Naive thymus-derived CD4-positive, alpha-beta T cell (primary cell): ENCODE measurements at regions of chr12 and their contacts with region 1.

Region 1: GRCh38 chr12:98373025-98373554 is 142.3 kb upstream of the TMPO start:
- DNase-seq: no peak
- ATAC-seq: no peak
- H3K4me3 ChIP-seq: no peak overlapping the region
- H3K4me3 Mint-ChIP-seq: no peak overlapping the region
- H3K27ac ChIP-seq: no peak overlapping the region
- H3K27ac Mint-ChIP-seq: no peak overlapping the region
- H3K4me1 ChIP-seq: no peaks in the 10 kb centered on the region
- H3K4me1 Mint-ChIP-seq: peaks cover 5 to 26% (median 10%) of the 10 kb centered on the region in 7 donors
- H3K27me3 ChIP-seq: peaks cover 0 to 5% of the 10 kb centered on the region in 2 donors
- H3K27me3 Mint-ChIP-seq: peaks cover 32 to 58% (median 48%) of the 10 kb centered on the region in 5 donors

Region 2: GRCh38 chr12:96985480-96986362 is 1387.4 kb before region 1 on chr12:
- CTCF ChIA-PET with region 1: no interaction called
- POLR2A ChIA-PET with region 1: no interaction called
- intact Hi-C with region 1: loop called in 1 of 2 experiments (anchors 2 kb)
- DNase-seq: peak in 8 of 9 donors; percentile 23 to 61 (median 48)
- ATAC-seq: peak; percentile 89
- H3K4me3 ChIP-seq: peak overlapping the region; percentile 52
- H3K4me3 Mint-ChIP-seq: peak overlapping the region; percentile 60 to 90 (median 84)
- H3K27ac ChIP-seq: no peak overlapping the region
- H3K27ac Mint-ChIP-seq: peak overlapping the region in 1 of 9 donors; percentile 49
- H3K4me1 ChIP-seq: peaks cover 0 to 4% of the 10 kb centered on the region in 2 donors
- H3K4me1 Mint-ChIP-seq: peaks cover 7 to 9% (median 8%) of the 10 kb centered on the region in 7 donors
- H3K27me3 ChIP-seq: no peaks in the 10 kb centered on the region
- H3K27me3 Mint-ChIP-seq: peaks cover 13 to 47% (median 33%) of the 10 kb centered on the region in 5 donors

Region 3: GRCh38 chr12:97148941-97149559 is 1224.0 kb before region 1 on chr12:
- CTCF ChIA-PET with region 1: no interaction called
- POLR2A ChIA-PET with region 1: no interaction called
- intact Hi-C with region 1: loop called in 1 of 2 experiments (anchors 1 kb)
- DNase-seq: peak; percentile 4 to 49 (median 10)
- ATAC-seq: peak; percentile 85
- H3K4me3 ChIP-seq: no peak overlapping the region
- H3K4me3 Mint-ChIP-seq: no peak overlapping the region
- H3K27ac ChIP-seq: no peak overlapping the region
- H3K27ac Mint-ChIP-seq: no peak overlapping the region
- H3K4me1 ChIP-seq: no peaks in the 10 kb centered on the region
- H3K4me1 Mint-ChIP-seq: peaks cover 0 to 5% (median 0%) of the 10 kb centered on the region in 7 donors
- H3K27me3 ChIP-seq: no peaks in the 10 kb centered on the region
- H3K27me3 Mint-ChIP-seq: peaks cover 7 to 22% (median 14%) of the 10 kb centered on the region in 5 donors

Region 4: GRCh38 chr12:97960754-97961608 is 412.1 kb before region 1 on chr12:
- CTCF ChIA-PET with region 1: no interaction called
- POLR2A ChIA-PET with region 1: no interaction called
- intact Hi-C with region 1: loop called in 1 of 2 experiments (anchors 1 kb)
- DNase-seq: peak in 1 of 9 donors; percentile 7
- ATAC-seq: no peak
- H3K4me3 ChIP-seq: no peak overlapping the region
- H3K4me3 Mint-ChIP-seq: no peak overlapping the region
- H3K27ac ChIP-seq: no peak overlapping the region
- H3K27ac Mint-ChIP-seq: no peak overlapping the region
- H3K4me1 ChIP-seq: no peaks in the 10 kb centered on the region
- H3K4me1 Mint-ChIP-seq: no peaks in the 10 kb centered on the region
- H3K27me3 ChIP-seq: no peaks in the 10 kb centered on the region
- H3K27me3 Mint-ChIP-seq: no peaks in the 10 kb centered on the region

Region 5: DNA sequence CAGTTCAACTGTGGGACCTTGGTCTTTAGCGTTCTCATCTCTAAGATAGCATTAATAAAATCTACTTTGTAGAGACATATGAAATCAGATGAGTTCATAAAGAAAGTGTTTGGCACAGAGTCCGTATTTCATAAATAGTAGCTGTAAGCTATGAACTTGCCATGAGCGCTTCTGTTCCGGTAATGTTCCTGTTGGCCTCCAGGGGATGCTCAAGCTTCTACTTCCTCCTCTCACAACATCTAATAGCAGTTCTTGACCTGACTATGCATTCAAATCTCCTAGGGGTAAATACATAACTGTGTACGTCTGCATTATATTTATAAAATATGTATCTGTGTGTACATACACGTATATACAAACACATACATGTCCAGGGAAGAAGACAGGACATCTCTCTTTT is 145.9 kb before region 1 on chr12:
- CTCF ChIA-PET with region 1: no interaction called
- POLR2A ChIA-PET with region 1: no interaction called
- intact Hi-C with region 1: loop called in 1 of 2 experiments (anchors 5 kb)
- DNase-seq: no peak
- ATAC-seq: no peak
- H3K4me3 ChIP-seq: no peak overlapping the region
- H3K4me3 Mint-ChIP-seq: no peak overlapping the region
- H3K27ac ChIP-seq: no peak overlapping the region
- H3K27ac Mint-ChIP-seq: no peak overlapping the region
- H3K4me1 ChIP-seq: no peaks in the 10 kb centered on the region
- H3K4me1 Mint-ChIP-seq: no peaks in the 10 kb centered on the region
- H3K27me3 ChIP-seq: no peaks in the 10 kb centered on the region
- H3K27me3 Mint-ChIP-seq: peaks cover 1 to 22% (median 11%) of the 10 kb centered on the region in 5 donors